Activated CD4-positive, alpha-beta memory T cell treated with anti-CD3 and anti-CD28 coated beads for 36 hours (primary cell): ENCODE measurements at regions of chr3 and their contacts with region 1.

Region 1: DNA sequence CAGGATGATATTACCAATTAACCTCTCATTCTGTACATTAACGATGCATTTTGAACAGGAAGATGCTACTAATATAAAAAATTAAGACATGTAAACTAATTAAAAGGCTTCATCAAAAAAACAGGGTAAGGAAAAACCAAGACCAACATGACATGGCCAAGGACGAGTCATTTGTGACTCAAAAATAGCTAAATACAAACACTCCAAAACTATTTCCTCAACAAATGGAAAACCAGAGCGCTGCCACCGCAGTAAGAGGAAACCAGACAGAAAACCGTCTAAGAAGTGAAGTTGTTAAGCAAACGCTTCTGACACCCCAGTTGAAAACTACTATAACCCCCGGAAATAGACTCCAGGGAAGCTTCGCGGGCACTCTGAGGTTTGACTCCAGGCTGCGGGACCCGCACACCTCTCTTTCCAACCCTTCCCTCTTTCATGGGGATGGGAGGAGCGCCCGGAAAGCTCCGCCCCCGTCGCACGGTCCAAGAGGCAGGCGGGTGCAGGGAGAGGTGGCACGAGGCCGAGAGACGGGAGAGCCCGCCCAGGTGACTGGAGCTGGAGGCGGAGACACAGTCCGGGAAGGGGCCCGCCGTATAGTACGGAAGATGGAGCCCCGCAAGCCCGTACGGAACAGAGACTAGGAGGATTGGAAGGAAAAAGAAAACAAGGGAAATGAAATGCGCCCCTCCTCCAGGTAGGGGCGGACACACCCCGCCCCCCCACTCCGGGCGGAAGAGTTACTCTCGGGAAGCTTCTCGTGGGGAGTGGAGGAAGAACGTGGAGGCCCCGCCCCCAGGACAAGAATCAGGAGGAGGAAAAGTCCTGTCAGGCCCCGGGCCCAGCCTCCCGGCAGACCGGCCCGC is 708 bp downstream of the DCAF1 start:
- DNase-seq: peak; percentile 93
- H3K4me3 Mint-ChIP-seq: peak overlapping the region; percentile 82
- H3K27ac Mint-ChIP-seq: peak overlapping the region; percentile 94
- H3K4me1 Mint-ChIP-seq: peaks cover 11% of the 10 kb centered on the region
- H3K27me3 Mint-ChIP-seq: peaks cover 1% of the 10 kb centered on the region

Region 2: DNA sequence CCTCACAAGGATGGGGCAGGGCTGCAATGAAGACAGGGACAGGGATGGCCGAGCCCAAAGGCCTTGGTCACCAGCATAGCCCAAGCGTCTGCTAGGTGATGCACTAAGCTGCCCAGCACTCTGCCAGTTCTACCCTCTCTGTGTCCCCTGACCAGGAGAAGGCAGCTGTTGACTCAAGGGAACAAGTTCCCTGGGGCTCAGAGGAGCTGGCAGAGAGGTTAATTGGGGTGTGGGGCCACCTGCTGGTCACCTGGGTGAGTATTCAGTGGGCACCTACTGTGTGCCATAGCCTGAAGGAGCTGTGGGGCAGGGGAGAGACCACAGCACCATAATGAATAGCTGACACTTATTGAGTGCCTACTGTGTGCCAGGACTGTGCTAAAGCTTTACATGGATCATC is 846.4 kb before region 1 on chr3:
- CTCF ChIA-PET with region 1: no interaction called
- POLR2A ChIA-PET with region 1: no interaction called
- intact Hi-C with region 1: no loop called
- DNase-seq: peak; percentile 77
- H3K4me3 Mint-ChIP-seq: no peak overlapping the region
- H3K27ac Mint-ChIP-seq: peak overlapping the region; percentile 19
- H3K4me1 Mint-ChIP-seq: peaks cover 28% of the 10 kb centered on the region
- H3K27me3 Mint-ChIP-seq: no peaks in the 10 kb centered on the region

Region 3: GRCh38 chr3:51384726-51385473 is 114.2 kb before region 1 on chr3 and contains the start of gene MANF:
- CTCF ChIA-PET with region 1: interaction called, 12 read pairs
- POLR2A ChIA-PET with region 1: interaction called, 10 read pairs
- intact Hi-C with region 1: loop called (anchors 1 kb)
- DNase-seq: peak; percentile 99
- H3K4me3 Mint-ChIP-seq: peak within 1 kb of the TSS; percentile 93
- H3K27ac Mint-ChIP-seq: peak within 1 kb of the TSS; percentile 98
- H3K4me1 Mint-ChIP-seq: peaks cover 50% of the 10 kb centered on the region
- H3K27me3 Mint-ChIP-seq: no peaks in the 10 kb centered on the region
- total RNA-seq, gene MANF: 151 to 162 TPM

Region 4: DNA sequence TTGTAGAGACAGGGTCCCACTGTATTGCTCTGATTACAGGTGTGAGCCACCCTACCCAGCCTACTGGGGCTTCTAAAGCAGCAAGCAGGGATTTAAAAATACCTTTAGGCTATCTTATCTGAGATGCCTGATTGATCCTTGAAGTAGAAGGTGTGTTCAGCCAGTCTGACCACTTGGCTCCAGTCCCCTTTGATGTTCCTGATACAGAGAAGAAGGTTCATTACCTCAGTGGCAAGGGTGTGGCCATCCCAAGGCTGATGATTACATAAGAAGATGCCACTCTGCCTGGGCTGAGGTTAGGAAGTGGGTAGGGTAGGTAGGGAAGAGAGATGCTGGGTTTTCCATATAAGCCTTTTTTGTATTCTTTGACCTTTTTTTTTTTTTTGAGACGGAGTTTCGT is 11.9 kb after region 1 on chr3:
- CTCF ChIA-PET with region 1: interaction called, 12 read pairs
- POLR2A ChIA-PET with region 1: interaction called, 3 read pairs
- intact Hi-C with region 1: no loop called
- DNase-seq: no peak
- H3K4me3 Mint-ChIP-seq: no peak overlapping the region
- H3K27ac Mint-ChIP-seq: no peak overlapping the region
- H3K4me1 Mint-ChIP-seq: no peaks in the 10 kb centered on the region
- H3K27me3 Mint-ChIP-seq: no peaks in the 10 kb centered on the region

Region 5: GRCh38 chr3:51547274-51547673 is 48.2 kb after region 1 on chr3:
- CTCF ChIA-PET with region 1: interaction called, 10 read pairs
- POLR2A ChIA-PET with region 1: no interaction called
- intact Hi-C with region 1: no loop called
- DNase-seq: no peak
- H3K4me3 Mint-ChIP-seq: no peak overlapping the region
- H3K27ac Mint-ChIP-seq: no peak overlapping the region
- H3K4me1 Mint-ChIP-seq: peaks cover 2% of the 10 kb centered on the region
- H3K27me3 Mint-ChIP-seq: no peaks in the 10 kb centered on the region

Region 6: DNA sequence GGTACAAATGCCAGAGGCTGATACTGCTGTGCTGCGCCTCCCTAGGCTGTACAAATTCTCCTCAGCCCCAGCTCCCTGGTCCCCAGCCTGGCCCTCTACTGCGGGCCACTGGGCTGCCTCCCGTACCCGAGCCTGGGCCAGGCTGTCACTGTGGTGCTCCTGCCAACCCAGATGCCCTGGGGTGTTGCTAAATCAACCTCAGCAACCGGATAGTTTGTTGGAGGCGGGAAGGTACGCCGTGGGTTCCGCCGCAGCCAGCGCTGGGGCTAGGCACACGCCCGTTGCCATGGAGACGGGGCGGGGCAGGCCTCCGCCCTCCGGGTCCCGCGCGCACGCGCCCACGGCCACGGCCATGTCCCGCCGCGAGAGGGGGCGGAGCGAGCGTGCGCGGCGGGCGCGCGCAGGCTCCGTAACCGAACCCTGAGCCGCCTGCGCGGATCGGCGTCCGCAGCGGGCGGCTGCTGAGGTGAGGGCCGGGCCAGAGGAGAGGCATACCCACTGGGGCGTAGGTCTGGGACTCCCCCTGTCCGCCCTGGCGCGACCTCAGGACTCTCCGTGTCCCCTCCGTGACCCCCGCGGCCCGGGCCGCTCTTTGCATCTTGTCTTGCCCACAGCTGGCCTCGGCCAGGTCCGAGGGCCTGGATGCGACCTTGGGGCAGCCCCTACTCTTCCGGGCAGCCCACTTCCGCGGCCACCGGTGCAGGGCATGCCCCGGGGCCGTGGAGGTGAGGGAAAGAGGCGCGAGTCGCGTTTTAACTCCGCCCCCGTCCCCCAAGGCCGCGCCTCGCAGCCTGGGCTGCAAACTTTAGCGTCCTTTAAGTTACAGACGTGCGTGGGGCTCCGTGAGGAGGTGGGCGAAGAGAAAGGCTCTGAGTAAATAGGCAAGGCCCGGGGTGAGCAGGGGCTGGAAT is 172.0 kb after region 1 on chr3 and contains the start of gene TEX264:
- CTCF ChIA-PET with region 1: interaction called, 261 read pairs
- POLR2A ChIA-PET with region 1: interaction called, 37 read pairs
- intact Hi-C with region 1: loop called (anchors 1 kb)
- DNase-seq: peak; percentile 92
- H3K4me3 Mint-ChIP-seq: peak within 1 kb of the TSS; percentile 87
- H3K27ac Mint-ChIP-seq: peak within 1 kb of the TSS; percentile 89
- H3K4me1 Mint-ChIP-seq: peaks cover 62% of the 10 kb centered on the region
- H3K27me3 Mint-ChIP-seq: no peaks in the 10 kb centered on the region
- total RNA-seq, gene TEX264: 44.9 to 45.2 TPM

Region 7: DNA sequence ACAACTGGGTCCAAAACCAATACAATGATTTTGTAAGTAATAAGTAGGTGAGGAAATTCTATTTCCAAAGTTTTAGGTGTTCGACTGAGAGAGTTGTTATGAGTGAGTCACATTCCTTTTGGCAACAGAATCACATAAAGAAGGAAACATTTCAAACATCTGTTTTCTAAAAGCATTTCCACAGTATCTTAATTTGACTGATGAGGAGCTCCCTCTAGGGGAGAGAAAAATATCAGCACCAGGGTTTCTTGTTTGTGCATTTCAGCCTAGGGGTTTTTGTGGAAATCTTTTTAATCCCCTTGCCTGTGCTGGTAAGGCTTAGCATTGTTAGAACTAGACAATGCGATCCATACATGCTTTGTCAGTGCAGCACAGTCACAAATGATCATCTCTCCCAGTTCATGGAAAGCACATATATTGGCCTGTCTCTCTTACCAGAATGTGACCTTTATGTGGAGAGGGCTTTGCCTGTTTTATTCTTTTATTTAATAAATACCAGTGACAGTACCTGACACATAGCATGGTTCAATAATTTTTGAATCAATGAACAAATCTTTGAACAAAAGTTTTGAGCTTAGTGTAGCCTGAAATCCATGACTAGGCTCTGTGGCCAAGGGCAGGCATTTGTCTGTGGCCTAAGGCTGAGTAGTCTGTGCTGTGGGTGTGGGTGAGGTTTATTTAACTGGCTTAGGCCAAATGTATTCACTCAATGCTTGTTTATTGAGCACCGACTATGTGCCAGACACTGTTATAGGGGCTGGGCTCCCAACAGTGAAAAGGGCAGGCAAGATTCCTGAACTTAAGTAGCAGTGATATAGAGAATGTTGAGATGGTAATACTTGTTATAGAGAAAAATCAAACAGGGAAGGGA is 301.0 kb after region 1 on chr3:
- CTCF ChIA-PET with region 1: interaction called, 42 read pairs
- POLR2A ChIA-PET with region 1: interaction called, 5 read pairs
- intact Hi-C with region 1: loop called (anchors 1 kb)
- DNase-seq: no peak
- H3K4me3 Mint-ChIP-seq: no peak overlapping the region
- H3K27ac Mint-ChIP-seq: no peak overlapping the region
- H3K4me1 Mint-ChIP-seq: peaks cover 13% of the 10 kb centered on the region
- H3K27me3 Mint-ChIP-seq: peaks cover 22% of the 10 kb centered on the region

Region 8: GRCh38 chr3:51974963-51975851 is 476.1 kb after region 1 on chr3 and contains the start of gene ABHD14A:
- CTCF ChIA-PET with region 1: interaction called, 3 read pairs
- POLR2A ChIA-PET with region 1: no interaction called
- intact Hi-C with region 1: loop called (anchors 10 kb)
- DNase-seq: peak; percentile 79
- H3K4me3 Mint-ChIP-seq: peak within 1 kb of the TSS; percentile 99
- H3K27ac Mint-ChIP-seq: peak within 1 kb of the TSS; percentile 97
- H3K4me1 Mint-ChIP-seq: peaks cover 36% of the 10 kb centered on the region
- H3K27me3 Mint-ChIP-seq: no peaks in the 10 kb centered on the region
- total RNA-seq, gene ABHD14A: 7.9 to 8.6 TPM